Ovary (tissue), 10 donors: ENCODE measurements at regions of chr15 and their contacts with region 1.

Region 1: DNA sequence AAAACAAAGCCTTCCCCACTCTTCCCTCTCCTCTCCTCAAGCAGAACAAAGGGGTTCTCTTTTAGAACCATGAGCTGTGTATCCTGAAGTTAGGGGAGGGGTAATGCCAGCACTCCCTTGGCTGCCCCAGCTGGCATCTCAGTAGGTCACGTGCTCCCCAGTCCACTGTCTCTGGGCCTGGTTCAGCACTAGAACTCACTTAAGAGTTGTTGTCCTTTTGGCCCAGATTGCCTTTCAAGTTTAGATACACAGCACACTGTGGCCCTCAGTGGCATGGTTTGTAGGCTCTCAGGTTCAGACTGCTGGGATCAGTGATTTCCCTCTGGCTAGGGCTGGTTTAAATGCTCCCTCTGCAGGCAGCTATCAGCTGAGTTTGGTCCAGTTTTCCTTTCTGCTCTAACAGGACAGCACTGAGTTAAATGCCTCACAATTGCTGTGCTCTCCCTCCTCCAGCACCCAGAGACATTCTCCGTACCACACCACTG is 188.4 kb upstream of the ST8SIA2 start:
- DNase-seq: no peak
- H3K4me3 ChIP-seq: no peak overlapping the region
- H3K27ac ChIP-seq: no peak overlapping the region
- H3K4me1 ChIP-seq: no peaks in the 10 kb centered on the region
- H3K27me3 ChIP-seq: no peaks in the 10 kb centered on the region
- CTCF ChIP-seq: no peak
- EP300 ChIP-seq: no peak
- POLR2A ChIP-seq: no peak

Region 2: GRCh38 chr15:92053840-92054239 is 151.5 kb before region 1 on chr15:
- intact Hi-C with region 1: loop called in 1 of 4 experiments (anchors 5 kb)
- DNase-seq: no peak
- H3K4me3 ChIP-seq: no peak overlapping the region
- H3K27ac ChIP-seq: no peak overlapping the region
- H3K4me1 ChIP-seq: peaks cover 1% of the 10 kb centered on the region
- H3K27me3 ChIP-seq: no peaks in the 10 kb centered on the region
- CTCF ChIP-seq: no peak
- EP300 ChIP-seq: no peak
- POLR2A ChIP-seq: no peak

Region 3: DNA sequence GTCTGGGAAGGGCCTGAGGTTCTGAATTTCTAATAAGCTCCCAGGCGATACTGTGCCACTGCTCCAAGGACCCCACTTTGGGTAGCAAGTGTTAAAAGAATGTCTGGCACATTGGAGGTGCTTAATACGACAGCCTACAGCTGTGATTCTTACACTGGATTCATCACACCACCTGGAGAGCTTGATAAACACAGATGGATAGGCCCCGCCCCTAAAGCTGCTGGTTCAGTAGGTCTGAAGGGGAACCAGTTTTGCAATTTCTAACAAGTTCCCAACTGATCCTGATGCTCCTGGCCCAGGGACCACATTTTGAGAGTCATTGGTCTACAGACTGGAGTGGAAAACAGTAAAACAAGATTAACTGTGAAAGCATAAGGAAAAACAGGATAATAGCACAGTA is 63.6 kb after region 1 on chr15:
- intact Hi-C with region 1: no loop called
- DNase-seq: no peak
- H3K4me3 ChIP-seq: no peak overlapping the region
- H3K27ac ChIP-seq: no peak overlapping the region
- H3K4me1 ChIP-seq: no peaks in the 10 kb centered on the region
- H3K27me3 ChIP-seq: no peaks in the 10 kb centered on the region
- CTCF ChIP-seq: no peak
- EP300 ChIP-seq: no peak
- POLR2A ChIP-seq: no peak